ENCODE measurements at regions of chr7 and their contacts with region 1.

Region 1: DNA sequence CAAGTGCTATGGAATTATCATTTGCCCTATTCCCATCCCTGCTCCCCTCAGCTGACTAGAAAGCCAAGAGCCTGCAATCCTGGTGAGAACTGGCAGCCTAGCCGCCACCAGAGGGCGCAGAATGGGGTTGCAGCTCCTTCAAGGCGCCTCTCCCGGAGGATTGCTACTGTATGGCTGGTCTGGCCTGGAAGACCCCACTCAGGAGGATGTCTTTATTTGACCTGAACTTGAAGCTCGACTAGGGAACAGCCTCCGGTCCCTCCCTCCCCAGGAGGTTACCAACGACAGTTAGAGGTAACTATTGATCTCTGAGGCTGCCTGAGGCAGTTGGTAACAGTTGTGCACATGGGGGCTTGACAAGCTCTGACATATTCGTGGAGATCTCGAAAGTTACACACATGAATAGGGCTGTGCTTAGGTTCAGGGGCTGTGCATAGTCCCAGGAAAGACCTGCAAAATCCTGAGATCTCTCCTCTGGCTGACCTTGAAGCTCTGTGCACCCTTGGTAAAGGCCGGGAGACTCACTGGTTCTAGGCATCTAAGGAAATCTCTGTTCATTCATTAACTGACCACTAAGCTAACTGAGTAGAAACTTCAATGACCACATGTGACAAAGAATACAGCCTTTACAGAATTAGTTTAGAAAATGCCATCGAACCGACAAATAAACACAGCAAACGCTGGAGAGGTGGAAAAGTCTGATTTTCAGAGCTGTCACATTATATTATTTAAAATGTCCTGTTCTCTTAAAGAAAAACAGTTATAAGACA is 65.7 kb downstream of the TSPAN12 start:
- DNase-seq: peak; percentile 22 to 43 (median 32)
- H3K4me3 ChIP-seq: no peak overlapping the region
- H3K4me3 Mint-ChIP-seq: no peak overlapping the region
- H3K27ac ChIP-seq: no peak overlapping the region
- H3K27ac Mint-ChIP-seq: no peak overlapping the region
- H3K4me1 ChIP-seq: no peaks in the 10 kb centered on the region
- H3K4me1 Mint-ChIP-seq: no peaks in the 10 kb centered on the region
- H3K27me3 ChIP-seq: no peaks in the 10 kb centered on the region
- H3K27me3 Mint-ChIP-seq: no peaks in the 10 kb centered on the region

Region 2: DNA sequence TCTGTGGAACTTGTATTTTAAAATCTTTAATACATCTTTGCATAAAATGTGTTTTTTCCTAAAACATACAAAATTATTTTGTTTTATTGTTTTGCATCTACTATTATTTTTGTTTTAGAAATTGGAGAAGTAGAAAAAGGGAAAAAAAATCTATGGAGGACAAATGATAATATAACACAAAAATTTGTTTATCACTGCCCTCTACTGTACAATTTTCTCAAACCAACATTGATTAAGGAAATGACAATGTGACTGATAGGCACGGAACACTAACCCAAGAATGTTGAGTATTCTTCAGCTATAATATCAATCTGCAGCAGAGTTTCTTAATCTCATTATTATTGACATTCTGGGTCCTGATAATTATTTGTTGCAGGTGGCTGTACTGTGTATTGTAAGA is 148.8 kb after region 1 on chr7:
- CTCF ChIA-PET with region 1: interaction called, 3 read pairs
- POLR2A ChIA-PET with region 1: no interaction called
- intact Hi-C with region 1: loop called (anchors 1 kb)
- DNase-seq: peak in 1 of 5 donors; percentile 10
- H3K4me3 ChIP-seq: no peak overlapping the region
- H3K4me3 Mint-ChIP-seq: no peak overlapping the region
- H3K27ac ChIP-seq: no peak overlapping the region
- H3K27ac Mint-ChIP-seq: no peak overlapping the region
- H3K4me1 ChIP-seq: no peaks in the 10 kb centered on the region
- H3K4me1 Mint-ChIP-seq: no peaks in the 10 kb centered on the region
- H3K27me3 ChIP-seq: no peaks in the 10 kb centered on the region
- H3K27me3 Mint-ChIP-seq: peaks cover 0 to 1% of the 10 kb centered on the region in 2 donors

Region 3: GRCh38 chr7:121081327-121081936 is 289.2 kb after region 1 on chr7:
- CTCF ChIA-PET with region 1: interaction called, 6 read pairs
- POLR2A ChIA-PET with region 1: no interaction called
- intact Hi-C with region 1: loop called (anchors 1 kb)
- DNase-seq: peak in 4 of 5 donors; percentile 39 to 51 (median 44)
- H3K4me3 ChIP-seq: no peak overlapping the region
- H3K4me3 Mint-ChIP-seq: no peak overlapping the region
- H3K27ac ChIP-seq: no peak overlapping the region
- H3K27ac Mint-ChIP-seq: no peak overlapping the region
- H3K4me1 ChIP-seq: no peaks in the 10 kb centered on the region
- H3K4me1 Mint-ChIP-seq: no peaks in the 10 kb centered on the region
- H3K27me3 ChIP-seq: no peaks in the 10 kb centered on the region
- H3K27me3 Mint-ChIP-seq: peaks cover 12 to 14% of the 10 kb centered on the region in 2 donors

Region 4: DNA sequence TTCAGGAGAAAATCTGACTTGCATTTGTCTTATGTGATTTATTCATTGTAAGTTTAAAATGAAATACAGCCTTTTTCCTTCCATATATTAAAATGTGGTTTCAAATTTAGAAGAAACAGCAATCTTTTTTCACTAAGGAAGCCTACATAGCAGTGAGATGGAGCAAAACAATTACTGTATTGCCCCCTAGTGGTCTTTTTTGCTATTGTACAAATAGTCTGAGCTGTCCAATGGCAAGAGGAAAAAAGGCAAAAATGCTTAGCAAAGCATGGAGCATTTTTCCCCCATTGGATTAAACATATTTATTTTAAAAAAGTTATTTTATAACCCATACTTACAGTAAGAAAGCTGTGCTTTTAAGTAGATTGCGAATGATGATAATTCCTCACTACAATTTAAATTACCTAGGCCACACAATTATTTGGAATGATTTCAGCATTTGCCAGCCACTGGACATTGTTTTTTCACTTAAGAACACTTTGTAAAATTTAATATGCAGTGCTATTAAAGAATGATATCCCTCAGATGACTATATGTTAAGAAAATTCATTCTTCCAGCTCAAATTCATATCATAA is 315.7 kb after region 1 on chr7:
- CTCF ChIA-PET with region 1: interaction called, 14 read pairs
- POLR2A ChIA-PET with region 1: no interaction called
- intact Hi-C with region 1: loop called (anchors 5 kb)
- DNase-seq: peak in 4 of 5 donors; percentile 47 to 56 (median 54)
- H3K4me3 ChIP-seq: no peak overlapping the region
- H3K4me3 Mint-ChIP-seq: no peak overlapping the region
- H3K27ac ChIP-seq: no peak overlapping the region
- H3K27ac Mint-ChIP-seq: no peak overlapping the region
- H3K4me1 ChIP-seq: no peaks in the 10 kb centered on the region
- H3K4me1 Mint-ChIP-seq: no peaks in the 10 kb centered on the region
- H3K27me3 ChIP-seq: no peaks in the 10 kb centered on the region
- H3K27me3 Mint-ChIP-seq: peaks cover 3 to 10% of the 10 kb centered on the region in 2 donors